T-cell (primary cell): ENCODE measurements at regions of chr6 and their contacts with region 1.

Region 1: DNA sequence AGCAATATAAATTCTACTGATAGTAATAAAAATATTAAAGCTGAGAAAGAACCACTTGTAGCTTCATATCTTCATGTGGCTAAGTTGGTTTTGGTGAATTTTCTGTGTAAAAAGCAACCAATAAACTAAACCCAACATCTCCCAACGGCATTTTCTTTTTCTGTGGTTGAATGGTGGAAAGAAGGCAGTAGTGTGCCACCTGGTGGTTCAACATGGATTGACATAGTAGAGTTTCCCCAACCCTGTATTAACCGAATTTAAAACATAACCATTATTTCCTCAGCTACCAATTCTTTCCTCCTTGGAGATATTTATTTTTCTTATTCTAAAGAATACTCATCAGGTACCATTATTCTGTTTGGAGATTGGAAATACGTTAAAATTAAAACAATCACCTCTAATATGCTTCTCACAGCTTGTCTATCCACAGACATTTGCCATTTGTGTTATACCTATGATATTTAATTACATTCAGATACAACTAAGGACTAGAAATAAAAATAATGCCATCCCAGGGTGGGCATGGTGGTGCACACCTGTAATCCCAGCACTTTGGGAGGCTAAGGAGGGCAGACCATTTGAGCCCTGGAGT is 117.1 kb upstream of the EEF1E1 start:
- DNase-seq: peak in 20 of 35 experiments; percentile 1 to 68 (median 12)
- ATAC-seq: peak in 2 of 4 experiments; percentile 41 to 45
- H3K4me3 ChIP-seq: no peak overlapping the region
- H3K4me3 Mint-ChIP-seq: no peak overlapping the region
- H3K27ac ChIP-seq: no peak overlapping the region
- H3K27ac Mint-ChIP-seq: no peak overlapping the region
- H3K4me1 ChIP-seq: no peaks in the 10 kb centered on the region
- H3K4me1 Mint-ChIP-seq: no peaks in the 10 kb centered on the region
- H3K27me3 ChIP-seq: peaks cover 0 to 3% of the 10 kb centered on the region in 2 experiments
- H3K27me3 Mint-ChIP-seq: peaks cover 9 to 16% of the 10 kb centered on the region in 2 donors

Region 2: GRCh38 chr6:8131256-8131897 is 88.1 kb before region 1 on chr6:
- CTCF ChIA-PET with region 1: interaction called, 10 to 52 read pairs
- POLR2A ChIA-PET with region 1: interaction called in 1 of 2 experiments, 3 read pairs
- DNase-seq: peak in 21 of 35 experiments; percentile 2 to 57 (median 15)
- ATAC-seq: peak; percentile 19 to 48 (median 46)
- H3K4me3 ChIP-seq: no peak overlapping the region
- H3K4me3 Mint-ChIP-seq: no peak overlapping the region
- H3K27ac ChIP-seq: no peak overlapping the region
- H3K27ac Mint-ChIP-seq: no peak overlapping the region
- H3K4me1 ChIP-seq: no peaks in the 10 kb centered on the region
- H3K4me1 Mint-ChIP-seq: peaks cover 0 to 7% (median 0%) of the 10 kb centered on the region in 3 donors
- H3K27me3 ChIP-seq: peaks cover 3 to 4% of the 10 kb centered on the region in 2 experiments
- H3K27me3 Mint-ChIP-seq: peaks cover 17 to 26% of the 10 kb centered on the region in 2 donors

Region 3: GRCh38 chr6:8229915-8230756 is 10.7 kb after region 1 on chr6:
- CTCF ChIA-PET with region 1: interaction called, 6 to 12 read pairs
- POLR2A ChIA-PET with region 1: no interaction called
- DNase-seq: no peak
- ATAC-seq: no peak
- H3K4me3 ChIP-seq: no peak overlapping the region
- H3K4me3 Mint-ChIP-seq: no peak overlapping the region
- H3K27ac ChIP-seq: no peak overlapping the region
- H3K27ac Mint-ChIP-seq: no peak overlapping the region
- H3K4me1 ChIP-seq: no peaks in the 10 kb centered on the region
- H3K4me1 Mint-ChIP-seq: no peaks in the 10 kb centered on the region
- H3K27me3 ChIP-seq: peaks cover 0 to 9% of the 10 kb centered on the region in 2 experiments
- H3K27me3 Mint-ChIP-seq: peaks cover 5 to 15% of the 10 kb centered on the region in 2 donors